IMR-90 (cell line): ENCODE measurements at regions of chr3 and their contacts with region 1.

Region 1: DNA sequence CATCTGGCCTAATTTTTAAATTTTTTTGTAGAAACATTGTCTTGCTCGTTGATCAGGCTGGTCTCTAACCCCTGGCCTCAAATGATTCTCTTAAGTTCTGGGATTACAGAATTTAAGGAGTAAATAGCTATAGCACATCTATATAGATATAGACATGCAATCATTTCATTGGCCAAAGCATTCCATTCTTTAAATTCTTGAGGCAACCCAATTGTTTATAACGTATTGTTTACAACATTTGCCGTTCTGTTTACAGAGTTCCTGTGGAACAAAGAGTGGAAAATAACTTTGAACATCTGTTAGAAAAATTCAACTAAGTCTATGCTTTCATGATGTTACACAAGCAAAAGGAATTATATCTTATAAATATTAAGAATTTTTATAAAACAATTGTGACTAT is 205.2 kb upstream of the ROBO2 start:
- DNase-seq: peak; percentile 25
- ATAC-seq: peak; percentile 88
- H3K4me3 ChIP-seq: no peak overlapping the region
- H3K27ac ChIP-seq: peak overlapping the region; percentile 81; the same call in 1 of the 2 replicates
- H3K4me1 ChIP-seq: no peaks in the 10 kb centered on the region
- H3K27me3 ChIP-seq: no peaks in the 10 kb centered on the region
- CTCF ChIP-seq: no peak
- POLR2A ChIP-seq: no peak
- RAD21 ChIP-seq: no peak

Region 2: DNA sequence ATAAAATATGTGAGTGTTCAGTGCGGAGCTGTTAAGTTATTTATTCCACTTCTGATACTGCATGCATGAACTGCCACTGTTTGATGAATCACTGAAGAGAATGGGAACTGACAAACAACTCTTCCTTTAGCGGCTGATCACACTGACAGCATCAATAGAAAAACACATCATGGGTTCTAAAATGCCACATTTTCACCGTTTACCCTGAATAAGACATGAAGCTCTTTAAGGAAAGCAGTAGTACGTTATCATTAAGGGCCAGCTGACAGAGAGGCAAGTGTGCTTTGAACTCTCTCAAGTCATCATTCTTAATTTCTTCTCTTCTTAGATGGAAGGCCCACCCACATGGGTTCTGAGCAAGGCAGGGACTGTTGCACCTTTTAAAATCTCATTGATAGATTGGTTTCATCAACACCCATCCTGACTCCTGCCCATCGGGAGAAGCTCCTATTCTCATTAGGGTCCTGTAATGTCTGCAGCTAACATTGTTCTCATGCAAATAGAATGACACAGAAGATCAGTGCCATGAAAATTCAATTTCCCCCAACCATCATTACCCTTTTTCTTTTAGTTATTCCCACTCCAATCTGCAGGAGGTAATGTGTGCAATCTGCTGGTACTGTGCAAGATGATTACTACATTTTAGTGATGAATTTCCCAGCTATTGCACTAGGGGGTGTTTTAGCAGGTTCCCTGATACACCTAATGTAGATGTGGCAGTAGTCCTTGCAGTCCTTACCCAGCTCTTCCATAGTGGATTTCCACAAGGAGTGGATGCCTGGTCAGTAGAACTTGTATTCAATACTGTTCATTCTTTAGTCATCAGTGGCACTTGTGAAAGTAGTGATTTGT is 324.3 kb after region 1 on chr3:
- CTCF ChIA-PET with region 1: no interaction called
- POLR2A ChIA-PET with region 1: no interaction called
- dilution Hi-C with region 1: no loop called
- in situ Hi-C with region 1: no loop called
- intact Hi-C with region 1: no loop called
- DNase-seq: no peak
- ATAC-seq: no peak
- H3K4me3 ChIP-seq: no peak overlapping the region
- H3K27ac ChIP-seq: no peak overlapping the region
- H3K4me1 ChIP-seq: no peaks in the 10 kb centered on the region
- H3K27me3 ChIP-seq: no peaks in the 10 kb centered on the region
- CTCF ChIP-seq: no peak
- POLR2A ChIP-seq: no peak
- RAD21 ChIP-seq: no peak

Region 3: GRCh38 chr3:77281721-77282120 is 447.1 kb after region 1 on chr3:
- CTCF ChIA-PET with region 1: no interaction called
- POLR2A ChIA-PET with region 1: no interaction called
- dilution Hi-C with region 1: no loop called
- in situ Hi-C with region 1: no loop called
- intact Hi-C with region 1: loop called (anchors 10 kb)
- DNase-seq: no peak
- ATAC-seq: no peak
- H3K4me3 ChIP-seq: no peak overlapping the region
- H3K27ac ChIP-seq: no peak overlapping the region
- H3K4me1 ChIP-seq: no peaks in the 10 kb centered on the region
- H3K27me3 ChIP-seq: no peaks in the 10 kb centered on the region
- CTCF ChIP-seq: no peak
- POLR2A ChIP-seq: no peak
- RAD21 ChIP-seq: no peak